ENCODE measurements at regions of chr3 and their contacts with region 1.

Region 1: DNA sequence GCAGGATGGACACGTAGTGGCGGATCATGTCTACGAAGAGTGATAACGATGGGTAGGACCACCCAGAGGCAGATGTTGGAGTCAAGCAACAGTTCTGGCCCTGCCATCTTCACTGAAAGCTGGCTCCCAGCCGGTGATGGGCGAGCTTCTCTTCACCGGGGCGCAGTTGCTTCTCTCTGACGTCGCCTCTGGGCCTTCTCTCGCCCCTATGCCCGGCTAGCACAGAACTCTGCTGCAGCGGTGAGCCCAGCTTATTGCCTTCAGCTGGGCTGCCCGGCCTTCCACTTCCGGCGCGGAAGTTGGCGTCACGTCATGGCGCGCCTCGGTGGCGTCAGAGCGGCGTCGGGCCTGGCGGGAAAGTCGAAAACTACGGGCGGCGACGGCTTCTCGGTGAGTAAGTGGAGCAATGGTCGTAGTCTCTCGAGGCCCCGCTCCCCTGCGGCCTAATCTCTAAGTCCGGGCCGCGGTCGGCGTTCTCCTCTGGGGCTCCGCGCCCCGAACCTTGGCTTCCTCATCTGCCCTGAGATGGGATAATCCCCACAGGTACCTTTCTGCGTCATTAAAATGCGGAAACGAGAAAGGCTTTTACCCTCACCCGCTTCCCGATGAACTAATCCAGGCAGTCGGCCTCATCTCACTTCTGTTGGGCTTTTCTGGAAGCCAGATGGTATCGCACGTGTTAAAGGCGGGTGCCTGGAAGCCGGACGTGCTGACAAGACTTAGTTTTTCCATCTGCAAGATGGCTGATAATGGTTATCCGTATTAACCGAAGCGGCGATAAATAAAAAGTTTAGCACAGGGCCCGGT is at the start of gene FANCD2:
- DNase-seq: peak; percentile 85 to 97 (median 92)

Region 2: DNA sequence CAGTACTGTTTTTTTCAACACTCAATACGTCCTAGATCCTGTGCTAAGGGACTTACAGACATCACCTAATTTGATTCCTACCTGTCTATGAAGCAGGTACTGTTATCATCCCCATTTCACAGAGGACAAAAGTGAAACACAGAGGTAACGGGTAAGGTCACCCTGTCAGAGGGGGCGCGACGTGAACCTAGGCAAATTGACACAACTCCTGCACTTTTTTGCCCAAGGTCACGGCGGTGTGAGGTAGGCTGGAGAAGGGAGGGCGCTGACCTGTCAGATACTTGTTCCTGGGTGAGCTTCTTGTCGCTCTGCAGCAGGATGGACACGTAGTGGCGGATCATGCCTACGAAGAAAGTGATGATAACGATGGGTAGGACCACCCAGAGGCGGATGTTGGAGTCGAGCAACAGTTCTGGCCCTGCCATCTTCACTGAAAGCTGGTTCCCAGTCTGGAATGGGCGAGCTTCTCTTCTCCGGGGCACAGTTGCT is 40.0 kb before region 1 on chr3:
- intact Hi-C with region 1: loop called (anchors 5 kb)
- DNase-seq: peak in 1 of 42 donors; percentile 16

Region 3: GRCh38 chr3:10419637-10420232 is 393.4 kb after region 1 on chr3:
- intact Hi-C with region 1: no loop called
- DNase-seq: peak in 32 of 42 donors; percentile 4 to 76 (median 44)